Posterior vena cava (tissue), 2 donors: ENCODE measurements at regions of chr6 and their contacts with region 1.

Region 1: DNA sequence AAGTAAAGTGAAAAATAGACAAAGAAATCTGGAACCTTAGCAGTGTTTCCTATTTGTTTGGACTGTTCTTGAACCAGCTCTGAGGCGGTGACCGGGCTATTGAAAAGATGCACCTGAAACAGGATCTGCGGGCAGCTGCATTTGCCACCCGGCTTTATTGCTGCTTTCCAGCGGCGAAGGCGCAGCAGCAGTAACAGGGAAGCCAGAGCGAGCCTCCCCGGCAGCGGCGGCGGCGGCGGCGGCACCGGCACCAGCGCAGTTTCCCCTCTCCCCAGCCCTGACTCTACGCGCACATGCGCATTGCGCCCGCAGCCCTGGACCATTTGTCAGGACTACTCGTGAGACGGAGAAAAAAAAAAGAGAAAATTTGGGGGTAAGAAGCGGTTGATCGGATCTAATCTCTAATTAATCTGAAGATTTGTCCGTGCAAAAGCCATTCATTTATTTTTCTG is at the start of gene L3MBTL3:
- DNase-seq: peak; percentile 96
- total RNA-seq, gene L3MBTL3: 6.4 to 10.5 TPM

Region 2: GRCh38 chr6:129598244-129599187 is 419.8 kb before region 1 on chr6:
- intact Hi-C with region 1: loop called in 1 of 2 experiments (anchors 10 kb)
- DNase-seq: no peak

Region 3: GRCh38 chr6:129989396-129989795 is 28.9 kb before region 1 on chr6:
- intact Hi-C with region 1: loop called in 1 of 2 experiments (anchors 1 kb)
- DNase-seq: no peak